Left ventricle myocardium inferior (tissue), 1 donor: ENCODE measurements at regions of chr7 and their contacts with region 1.

Region 1: GRCh38 chr7:48438206-48438605 is 266.9 kb downstream of the ABCA13 start:
- DNase-seq: no peak
- H3K4me3 ChIP-seq: no peak overlapping the region
- H3K27ac ChIP-seq: no peak overlapping the region
- H3K4me1 ChIP-seq: no peaks in the 10 kb centered on the region
- H3K27me3 ChIP-seq: no peaks in the 10 kb centered on the region
- CTCF ChIP-seq: no peak

Region 2: GRCh38 chr7:48312151-48312550 is 126.1 kb before region 1 on chr7:
- intact Hi-C with region 1: no loop called
- DNase-seq: no peak
- H3K4me3 ChIP-seq: no peak overlapping the region
- H3K27ac ChIP-seq: no peak overlapping the region
- H3K4me1 ChIP-seq: no peaks in the 10 kb centered on the region
- H3K27me3 ChIP-seq: peaks cover 6% of the 10 kb centered on the region
- CTCF ChIP-seq: no peak

Region 3: DNA sequence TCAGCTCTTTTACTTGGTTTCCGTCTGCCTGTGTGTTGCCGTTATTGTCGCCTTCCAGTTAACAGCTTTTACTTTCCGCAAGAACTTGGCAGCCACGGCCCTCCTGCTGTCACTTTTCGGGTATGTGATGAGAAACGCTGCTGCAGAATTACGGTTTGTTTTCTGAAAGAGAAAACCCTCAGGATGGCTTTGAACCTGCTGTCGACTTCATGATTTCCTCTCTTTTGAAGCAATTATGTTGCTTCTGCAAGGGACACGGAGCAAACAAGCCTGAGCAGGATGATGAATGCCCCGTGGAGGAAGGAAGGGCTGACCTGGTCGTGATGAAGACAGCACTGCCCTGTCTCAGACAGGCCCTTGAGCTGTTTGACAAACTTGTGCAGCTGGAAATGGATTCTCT is 72.9 kb after region 1 on chr7:
- intact Hi-C with region 1: no loop called
- DNase-seq: no peak
- H3K4me3 ChIP-seq: no peak overlapping the region
- H3K27ac ChIP-seq: no peak overlapping the region
- H3K4me1 ChIP-seq: no peaks in the 10 kb centered on the region
- H3K27me3 ChIP-seq: peaks cover 6% of the 10 kb centered on the region
- CTCF ChIP-seq: no peak

Region 4: GRCh38 chr7:48875045-48875916 is 437.1 kb after region 1 on chr7:
- intact Hi-C with region 1: loop called (anchors 10 kb)
- DNase-seq: peak; percentile 25
- H3K4me3 ChIP-seq: no peak overlapping the region
- H3K27ac ChIP-seq: no peak overlapping the region
- H3K4me1 ChIP-seq: no peaks in the 10 kb centered on the region
- H3K27me3 ChIP-seq: peaks cover 3% of the 10 kb centered on the region
- CTCF ChIP-seq: peak; percentile 69